Activated naive CD4-positive, alpha-beta T cell treated with anti-CD3 and anti-CD28 coated beads for 36 hours (primary cell): ENCODE measurements at regions of chr5 and their contacts with region 1.

Region 1: DNA sequence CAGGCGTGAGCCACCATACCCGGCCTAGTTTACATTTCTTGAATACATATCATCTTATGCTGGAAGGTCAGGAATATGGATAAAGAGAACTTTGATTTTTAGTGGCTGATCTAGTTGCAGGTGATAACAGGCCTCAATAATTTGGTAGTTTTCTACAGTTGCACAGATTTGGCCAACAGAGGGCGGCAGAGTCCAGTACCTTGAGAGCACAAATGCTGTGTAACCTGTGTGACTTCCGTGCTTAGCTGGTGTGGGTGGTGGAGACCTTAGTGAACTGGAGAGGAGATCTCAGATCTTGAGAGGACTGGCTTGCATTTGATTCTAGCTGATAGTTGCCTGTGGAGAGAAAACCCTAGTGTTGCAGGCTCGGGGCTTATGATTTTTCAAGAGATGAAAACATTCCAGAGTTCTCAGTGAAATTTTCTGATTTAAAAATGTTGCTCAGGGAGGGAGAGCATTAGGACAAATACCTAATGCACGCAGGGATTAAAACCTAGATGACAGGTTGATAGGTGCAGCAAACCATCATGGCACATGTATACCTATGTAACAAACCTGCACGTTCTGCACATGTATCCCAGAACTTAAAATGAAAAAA is 17.4 kb upstream of the GPR151 start:
- DNase-seq: peak; percentile 90
- H3K4me3 Mint-ChIP-seq: no peak overlapping the region
- H3K27ac Mint-ChIP-seq: no peak overlapping the region
- H3K4me1 Mint-ChIP-seq: peaks cover 3% of the 10 kb centered on the region
- H3K27me3 Mint-ChIP-seq: no peaks in the 10 kb centered on the region

Region 2: DNA sequence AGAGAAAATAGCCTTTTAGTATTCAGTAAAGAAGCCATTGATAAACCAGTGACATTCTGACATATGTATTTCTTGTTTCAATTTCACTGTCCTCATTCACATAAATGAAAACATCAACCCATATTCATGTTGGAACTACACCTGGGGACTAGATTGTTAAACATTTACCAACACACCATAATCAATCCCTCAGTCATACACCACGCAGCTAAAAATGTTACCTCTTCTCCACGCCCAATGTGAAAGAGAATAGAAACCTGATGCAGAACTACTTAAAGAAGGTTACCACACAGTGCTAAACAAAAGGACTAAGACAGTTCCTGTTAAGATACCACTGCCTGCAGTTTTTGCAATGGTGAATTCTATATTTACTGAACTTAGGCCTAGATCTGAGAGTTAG is 1217.1 kb before region 1 on chr5:
- CTCF ChIA-PET with region 1: no interaction called
- intact Hi-C with region 1: no loop called
- DNase-seq: no peak
- H3K4me3 Mint-ChIP-seq: no peak overlapping the region
- H3K27ac Mint-ChIP-seq: no peak overlapping the region
- H3K4me1 Mint-ChIP-seq: no peaks in the 10 kb centered on the region
- H3K27me3 Mint-ChIP-seq: no peaks in the 10 kb centered on the region

Region 3: DNA sequence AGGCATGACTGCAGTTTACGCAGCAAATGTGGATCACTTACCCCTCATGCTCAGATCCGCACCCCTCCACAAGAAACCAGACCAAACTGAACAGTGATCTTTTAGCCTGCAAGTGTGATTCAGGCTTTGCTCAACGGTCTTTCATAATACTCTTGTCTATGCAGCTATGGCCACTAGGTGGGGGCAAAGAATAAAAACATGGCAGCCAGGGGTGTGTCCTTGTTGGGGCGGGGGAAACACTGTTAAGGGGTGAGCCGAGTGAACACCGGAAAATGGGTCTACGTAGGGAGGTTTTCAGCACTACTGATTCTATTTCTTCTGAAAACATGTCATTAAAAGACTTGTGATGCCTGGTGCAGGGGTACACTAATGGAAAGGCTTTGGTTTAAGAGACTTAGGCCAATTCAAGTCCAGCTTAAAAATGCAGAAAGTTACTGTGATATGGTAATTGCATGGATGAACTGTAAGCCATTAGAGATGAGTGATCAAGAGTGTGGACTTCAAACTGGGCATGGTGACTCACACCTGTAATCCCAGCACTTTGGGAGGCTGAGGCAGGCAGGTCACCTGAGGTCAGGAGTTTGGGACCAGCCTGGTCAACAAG is 32.5 kb after region 1 on chr5:
- CTCF ChIA-PET with region 1: interaction called, 5 read pairs
- intact Hi-C with region 1: loop called (anchors 1 kb)
- DNase-seq: peak; percentile 73
- H3K4me3 Mint-ChIP-seq: no peak overlapping the region
- H3K27ac Mint-ChIP-seq: no peak overlapping the region
- H3K4me1 Mint-ChIP-seq: peaks cover 4% of the 10 kb centered on the region
- H3K27me3 Mint-ChIP-seq: no peaks in the 10 kb centered on the region

Region 4: DNA sequence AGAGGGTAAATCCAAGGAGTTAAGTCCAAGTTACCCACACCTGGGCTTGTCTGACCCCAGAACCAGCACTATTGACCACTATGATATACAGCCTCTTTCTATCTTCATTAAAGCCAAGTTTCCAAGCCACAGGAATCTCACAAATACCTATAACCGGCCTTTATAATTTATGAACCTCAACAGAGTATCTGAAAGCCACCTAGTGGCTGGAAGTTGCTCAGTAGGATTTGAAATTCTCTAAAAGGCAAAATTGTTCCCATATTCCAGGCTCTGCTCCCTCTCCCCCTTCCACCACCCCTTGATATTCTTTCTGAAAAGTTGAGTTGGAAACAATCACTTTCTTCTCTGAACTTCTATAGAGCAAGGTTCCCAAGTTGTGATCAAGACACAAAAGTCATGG is 89.0 kb after region 1 on chr5:
- CTCF ChIA-PET with region 1: no interaction called
- intact Hi-C with region 1: loop called (anchors 5 kb)
- DNase-seq: no peak
- H3K4me3 Mint-ChIP-seq: no peak overlapping the region
- H3K27ac Mint-ChIP-seq: no peak overlapping the region
- H3K4me1 Mint-ChIP-seq: no peaks in the 10 kb centered on the region
- H3K27me3 Mint-ChIP-seq: no peaks in the 10 kb centered on the region

Region 5: GRCh38 chr5:146667633-146668272 is 134.4 kb after region 1 on chr5:
- CTCF ChIA-PET with region 1: no interaction called
- intact Hi-C with region 1: no loop called
- DNase-seq: no peak
- H3K4me3 Mint-ChIP-seq: no peak overlapping the region
- H3K27ac Mint-ChIP-seq: no peak overlapping the region
- H3K4me1 Mint-ChIP-seq: peaks cover 9% of the 10 kb centered on the region
- H3K27me3 Mint-ChIP-seq: no peaks in the 10 kb centered on the region